ENCODE measurements at regions of chr15 and their contacts with region 1.

Region 1: DNA sequence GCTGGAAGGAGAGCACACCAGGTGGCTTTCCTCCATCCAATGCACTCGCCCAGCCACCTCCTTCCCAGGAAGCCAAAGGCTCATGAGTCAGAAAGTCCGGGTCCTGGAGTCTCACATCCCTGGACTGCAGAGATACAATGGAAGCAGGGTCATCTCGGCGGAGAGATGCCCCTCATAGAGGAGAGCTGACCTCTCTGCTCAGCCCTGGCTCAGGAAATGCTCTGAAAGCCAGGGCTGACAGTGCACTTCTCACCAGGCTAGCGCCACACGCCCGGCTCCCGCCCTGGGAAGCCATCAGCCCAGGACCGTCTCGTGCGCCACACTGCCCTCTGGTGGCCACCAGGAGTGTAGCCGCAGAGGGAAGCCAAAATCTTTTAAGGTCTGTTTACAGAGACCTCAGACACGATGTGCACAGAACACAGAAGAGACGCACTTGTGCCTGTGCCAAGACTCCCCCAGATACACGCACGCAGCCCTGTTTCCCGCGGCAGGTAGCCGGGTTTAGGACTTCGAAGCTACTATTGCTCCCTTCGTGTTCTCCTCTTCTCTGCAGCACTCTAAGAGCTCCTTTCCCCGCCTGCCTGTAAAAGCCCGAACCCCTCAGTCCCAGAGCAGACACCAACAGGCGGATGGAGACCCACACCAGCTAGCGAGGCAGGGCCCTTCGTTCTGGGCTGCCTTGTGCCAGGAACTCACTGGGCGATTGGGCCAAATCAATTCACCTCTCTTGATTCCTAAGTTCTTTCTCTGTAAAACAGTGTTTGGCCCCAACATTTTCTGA is 9.7 kb downstream of the NTRK3 start:
- DNase-seq: peak; percentile 24
- H3K4me3 ChIP-seq: no peak overlapping the region
- H3K27ac ChIP-seq: no peak overlapping the region
- H3K27me3 ChIP-seq: peaks cover 4% of the 10 kb centered on the region
- CTCF ChIP-seq: peak; percentile 92

Region 2: GRCh38 chr15:87919064-87919463 is 327.8 kb before region 1 on chr15:
- CTCF ChIA-PET with region 1: no interaction called
- POLR2A ChIA-PET with region 1: no interaction called
- DNase-seq: no peak
- H3K4me3 ChIP-seq: no peak overlapping the region
- H3K27ac ChIP-seq: no peak overlapping the region
- H3K27me3 ChIP-seq: no peaks in the 10 kb centered on the region
- CTCF ChIP-seq: no peak

Region 3: GRCh38 chr15:88234711-88235110 is 12.1 kb before region 1 on chr15:
- CTCF ChIA-PET with region 1: interaction called, 32 read pairs
- POLR2A ChIA-PET with region 1: no interaction called
- DNase-seq: no peak
- H3K4me3 ChIP-seq: no peak overlapping the region
- H3K27ac ChIP-seq: no peak overlapping the region
- H3K27me3 ChIP-seq: no peaks in the 10 kb centered on the region
- CTCF ChIP-seq: no peak

Region 4: DNA sequence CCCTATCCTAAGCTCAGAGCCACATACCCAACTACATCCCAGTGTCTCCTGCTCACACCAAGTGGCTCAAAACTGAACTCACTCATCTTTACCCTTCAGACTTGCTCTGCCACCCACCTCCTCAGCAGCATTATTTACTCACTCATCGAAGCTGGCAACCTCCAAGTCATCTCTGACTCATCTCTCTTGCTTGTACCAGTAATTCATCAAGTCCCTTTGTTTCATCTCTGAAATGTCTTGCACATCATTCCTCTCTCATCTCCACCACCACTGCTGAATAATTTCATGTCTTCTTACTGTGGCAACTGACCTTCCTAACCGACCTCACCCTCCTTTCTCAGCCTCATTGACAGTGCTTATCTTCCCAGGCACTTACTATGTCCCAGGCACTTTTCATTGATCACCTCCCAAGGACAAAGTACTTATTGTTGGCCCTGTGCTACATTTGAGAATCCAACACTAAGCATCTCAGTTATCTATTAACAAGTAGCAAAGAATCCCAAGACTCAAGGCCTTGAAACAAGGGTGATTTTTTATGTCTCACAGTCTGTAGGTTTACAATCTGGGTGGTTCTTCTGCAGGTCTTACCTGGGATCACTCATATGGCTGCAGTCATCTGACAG is 138.3 kb after region 1 on chr15:
- CTCF ChIA-PET with region 1: no interaction called
- POLR2A ChIA-PET with region 1: no interaction called
- DNase-seq: no peak
- H3K4me3 ChIP-seq: no peak overlapping the region
- H3K27ac ChIP-seq: no peak overlapping the region
- H3K27me3 ChIP-seq: no peaks in the 10 kb centered on the region
- CTCF ChIP-seq: no peak